Endothelial cell of umbilical vein (primary cell): ENCODE measurements at regions of chr4 and their contacts with region 1.

Region 1: DNA sequence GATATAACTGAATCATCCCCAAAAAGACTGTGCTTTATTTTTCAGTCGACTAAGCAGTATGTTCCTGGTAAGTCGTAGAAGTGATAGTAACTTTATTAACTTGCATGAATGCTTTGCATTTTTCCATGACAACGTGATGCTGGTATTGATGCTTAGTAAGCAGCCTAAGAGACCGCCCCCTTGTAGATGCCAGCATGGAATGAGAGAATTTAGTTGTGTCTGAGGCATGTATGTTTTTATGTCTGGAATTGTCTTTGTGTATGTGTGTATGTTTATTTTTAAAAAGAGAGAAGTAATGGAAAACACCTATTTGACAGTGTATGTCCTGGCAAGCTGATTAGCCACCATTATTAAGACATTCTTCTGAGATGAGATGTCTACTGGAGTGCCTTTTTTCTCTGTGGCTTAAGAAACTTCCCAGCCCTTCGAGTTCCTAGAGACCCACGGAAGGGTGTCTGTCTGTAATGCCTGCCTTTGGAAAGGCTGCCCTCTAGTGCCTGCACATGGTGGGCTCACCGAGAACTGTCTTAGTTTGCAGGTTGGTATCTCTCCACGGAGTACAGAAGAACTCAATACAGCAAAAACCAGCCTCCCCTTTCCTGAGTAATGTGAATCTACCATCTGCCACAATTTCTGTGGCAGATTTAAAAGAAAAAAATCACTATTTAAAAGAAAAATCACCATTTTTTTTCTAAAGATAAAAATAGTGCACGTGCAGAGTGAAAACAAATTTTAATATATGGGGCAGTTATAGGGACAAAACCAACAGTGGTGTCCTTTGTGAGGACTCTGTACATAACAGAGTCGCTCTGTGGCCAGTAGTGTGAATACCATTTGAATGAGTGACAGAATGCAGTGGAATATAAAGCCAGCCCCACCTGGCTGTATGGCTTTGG is 85.9 kb downstream of the AASDH start:
- DNase-seq: peak; percentile 84
- H3K4me3 ChIP-seq: peak overlapping the region in 1 of 3 experiments; percentile 23
- H3K27ac ChIP-seq: peak overlapping the region; percentile 35
- H3K4me1 ChIP-seq: no peaks in the 10 kb centered on the region
- H3K27me3 ChIP-seq: no peaks in the 10 kb centered on the region
- CTCF ChIP-seq: peak; percentile 90
- POLR2A ChIP-seq: no peak

Region 2: DNA sequence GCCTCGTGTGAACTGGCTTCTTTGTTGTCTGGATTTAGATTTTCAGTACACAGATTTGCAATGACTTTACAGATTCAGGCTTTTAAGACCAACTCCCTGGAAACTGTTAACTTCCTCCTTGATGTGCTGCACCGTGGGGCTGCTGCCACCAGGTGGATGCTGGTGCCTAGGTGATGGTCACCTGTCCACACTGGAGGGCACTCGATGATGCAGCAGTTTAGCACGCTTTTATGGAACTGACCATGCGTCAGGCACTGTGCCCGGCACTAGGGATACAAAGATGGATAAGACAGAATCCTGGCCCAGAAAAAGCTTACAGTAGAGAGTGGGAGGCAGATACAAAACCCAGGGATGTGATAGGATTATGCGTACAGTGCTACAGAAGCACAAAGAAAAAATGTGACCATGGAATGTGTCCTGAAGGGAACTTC is 172.0 kb before region 1 on chr4:
- CTCF ChIA-PET with region 1: no interaction called
- POLR2A ChIA-PET with region 1: no interaction called
- dilution Hi-C with region 1: no loop called
- intact Hi-C with region 1: loop called (anchors 2 kb)
- DNase-seq: no peak
- H3K4me3 ChIP-seq: no peak overlapping the region
- H3K27ac ChIP-seq: no peak overlapping the region
- H3K4me1 ChIP-seq: peaks cover 23% of the 10 kb centered on the region
- H3K27me3 ChIP-seq: no peaks in the 10 kb centered on the region
- CTCF ChIP-seq: no peak
- POLR2A ChIP-seq: no peak

Region 3: GRCh38 chr4:56229947-56230346 is 71.5 kb before region 1 on chr4:
- CTCF ChIA-PET with region 1: no interaction called
- POLR2A ChIA-PET with region 1: no interaction called
- dilution Hi-C with region 1: no loop called
- intact Hi-C with region 1: no loop called
- DNase-seq: no peak
- H3K4me3 ChIP-seq: no peak overlapping the region
- H3K27ac ChIP-seq: no peak overlapping the region
- H3K4me1 ChIP-seq: no peaks in the 10 kb centered on the region
- H3K27me3 ChIP-seq: peaks cover 0 to 6% of the 10 kb centered on the region in 2 experiments
- CTCF ChIP-seq: no peak
- POLR2A ChIP-seq: no peak

Region 4: GRCh38 chr4:56400560-56400959 is 99.1 kb after region 1 on chr4:
- CTCF ChIA-PET with region 1: no interaction called
- POLR2A ChIA-PET with region 1: no interaction called
- dilution Hi-C with region 1: no loop called
- intact Hi-C with region 1: no loop called
- DNase-seq: no peak
- H3K4me3 ChIP-seq: no peak overlapping the region
- H3K27ac ChIP-seq: no peak overlapping the region
- H3K4me1 ChIP-seq: peaks cover 12% of the 10 kb centered on the region
- H3K27me3 ChIP-seq: no peaks in the 10 kb centered on the region
- CTCF ChIP-seq: no peak
- POLR2A ChIP-seq: no peak